ENCODE measurements at regions of chr14 and their contacts with region 1.

Region 1: DNA sequence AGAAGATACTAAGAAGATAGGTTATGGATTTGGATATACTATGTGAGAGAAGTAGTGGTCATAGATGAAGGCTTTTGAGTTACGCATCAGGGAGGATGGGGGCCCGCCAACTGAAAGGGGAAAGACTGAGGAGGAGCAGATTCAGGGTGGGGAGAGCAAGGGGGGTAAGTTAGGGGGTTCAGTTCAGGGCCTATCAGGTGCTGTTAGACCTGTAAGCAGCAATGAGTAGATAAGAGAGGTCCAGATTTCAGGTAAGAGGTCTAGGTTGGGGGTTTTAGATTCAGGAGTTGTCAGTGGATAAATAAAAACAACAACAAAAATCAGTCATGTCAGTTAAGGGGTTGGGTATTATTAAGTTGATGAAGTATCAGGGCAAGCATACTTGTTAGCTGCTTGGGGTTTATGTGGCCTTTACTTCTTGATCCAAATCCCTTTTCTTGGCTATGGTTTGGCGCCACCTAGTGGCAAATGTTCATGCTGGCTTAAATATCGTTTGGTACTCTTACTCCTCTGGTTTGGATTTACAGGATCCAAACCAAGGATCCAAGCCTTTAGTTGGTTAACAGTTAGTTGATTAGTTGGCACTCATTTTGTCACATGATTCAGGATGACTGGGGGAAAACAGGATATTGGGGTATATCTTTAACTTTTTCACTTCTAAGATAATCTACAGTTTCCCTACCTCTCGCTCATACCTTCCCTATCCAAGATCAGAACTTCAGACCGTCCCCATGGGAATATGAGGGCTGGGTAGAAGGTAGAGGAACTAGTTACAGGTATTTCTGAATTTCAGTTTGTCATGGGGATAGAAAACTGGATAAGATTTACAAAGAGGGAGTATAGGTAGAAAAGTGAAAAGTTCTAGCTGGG is 65.1 kb downstream of the PCNX1 start:
- DNase-seq: peak; percentile 76
- ATAC-seq: peak; percentile 95

Region 2: GRCh38 chr14:70816525-70816924 is 155.8 kb before region 1 on chr14:
- intact Hi-C with region 1: loop called (anchors 5 kb)
- DNase-seq: no peak
- ATAC-seq: no peak

Region 3: DNA sequence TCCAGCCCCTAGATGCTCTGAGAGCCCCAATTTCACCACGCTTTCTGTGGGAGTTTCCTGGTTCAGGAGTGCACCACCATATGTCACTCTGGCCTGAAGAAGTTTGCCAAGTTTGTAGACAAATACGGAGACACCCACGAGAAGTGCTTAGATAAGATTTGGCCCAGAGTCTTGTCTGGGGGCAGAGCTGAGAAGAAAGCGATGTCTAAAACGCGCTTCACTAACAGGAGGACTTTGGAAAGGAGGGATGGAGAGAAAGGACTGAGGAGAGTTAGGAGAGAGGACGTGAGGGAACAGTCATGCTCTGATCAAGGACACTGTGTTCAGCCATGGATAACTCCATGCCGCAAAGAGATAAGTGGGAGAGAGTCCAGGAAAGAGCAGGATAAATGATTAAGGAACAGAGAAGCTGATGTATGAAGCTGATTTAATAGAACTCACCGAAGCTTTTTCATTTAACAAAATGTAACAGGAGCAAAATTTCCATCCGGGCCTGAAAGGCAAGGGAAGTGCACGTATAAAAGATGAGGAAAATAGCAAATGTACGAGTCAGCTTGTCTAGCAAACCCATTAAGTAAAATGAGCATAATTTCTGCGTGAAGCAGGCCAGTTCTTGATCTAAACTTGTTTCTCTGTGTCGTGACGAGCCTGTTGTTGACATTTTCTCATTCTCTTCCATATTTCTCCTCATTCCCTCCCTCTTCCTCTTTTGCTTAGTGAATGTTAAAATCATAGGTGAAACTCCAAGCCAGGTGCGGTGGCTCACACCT is 139.6 kb before region 1 on chr14:
- intact Hi-C with region 1: loop called (anchors 5 kb)
- DNase-seq: no peak
- ATAC-seq: peak; percentile 87

Region 4: GRCh38 chr14:70907176-70907995 is 65.0 kb before region 1 on chr14 and contains the start of gene PCNX1:
- intact Hi-C with region 1: loop called (anchors 5 kb)
- DNase-seq: peak; percentile 93
- ATAC-seq: peak; percentile 85
- total RNA-seq, gene PCNX1: 43.3 TPM